Right cardiac atrium (tissue), 5 donors: ENCODE measurements at regions of chr2 and their contacts with region 1.

Region 1: DNA sequence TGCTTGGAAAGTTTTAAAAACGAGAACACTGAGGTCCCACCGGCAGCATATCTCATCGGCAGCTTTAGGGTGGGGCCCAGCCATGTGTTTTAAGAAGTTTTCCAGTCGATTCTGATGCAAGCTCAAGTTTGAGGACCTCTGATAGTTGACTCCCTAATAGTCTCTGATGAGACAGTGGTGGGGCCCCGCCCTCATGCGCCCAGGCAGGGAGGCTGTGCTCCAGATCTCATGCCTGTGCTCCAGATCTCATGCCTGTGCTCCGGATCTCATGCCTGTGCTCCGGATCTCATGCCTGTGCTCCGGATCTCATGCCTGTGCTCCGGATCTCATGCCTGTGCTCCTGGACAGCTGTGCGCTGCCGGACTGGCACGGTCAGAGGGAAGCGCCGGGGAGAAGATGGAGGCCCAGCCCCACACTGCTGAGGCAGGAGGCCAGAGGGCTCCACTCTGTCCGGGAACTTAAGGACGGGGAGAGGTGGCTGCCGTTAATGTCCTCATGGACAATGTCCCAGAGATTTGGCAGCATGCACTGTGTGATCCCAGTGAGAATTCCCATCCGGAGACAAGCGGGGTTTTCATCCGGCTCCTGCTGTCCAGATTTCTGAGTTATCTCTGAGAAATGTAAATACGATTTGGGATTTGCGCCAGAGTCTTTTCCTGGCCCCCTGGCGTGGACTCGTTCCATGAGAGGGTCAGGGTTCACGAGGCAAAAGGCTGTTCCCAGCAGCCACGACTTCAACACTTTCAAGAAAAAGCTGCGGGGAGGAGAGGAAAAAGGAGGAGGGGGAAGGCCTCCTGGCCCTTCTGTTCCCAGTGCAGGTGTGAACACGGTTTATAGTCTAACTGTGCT is 9.4 kb upstream of the COLEC11 start:
- DNase-seq: peak; percentile 77 to 91 (median 89)
- ATAC-seq: peak; percentile 93 to 94
- H3K4me3 ChIP-seq: no peak overlapping the region
- H3K27ac ChIP-seq: peak overlapping the region; percentile 100
- H3K4me1 ChIP-seq: peaks cover 7% of the 10 kb centered on the region
- H3K27me3 ChIP-seq: no peaks in the 10 kb centered on the region

Region 2: GRCh38 chr2:3644246-3644525 is 58.7 kb after region 1 on chr2:
- intact Hi-C with region 1: loop called in 1 of 4 experiments (anchors 10 kb)
- DNase-seq: no peak
- ATAC-seq: no peak
- H3K4me3 ChIP-seq: no peak overlapping the region
- H3K27ac ChIP-seq: no peak overlapping the region
- H3K4me1 ChIP-seq: no peaks in the 10 kb centered on the region
- H3K27me3 ChIP-seq: no peaks in the 10 kb centered on the region

Region 3: GRCh38 chr2:3651691-3652648 is 66.5 kb after region 1 on chr2:
- intact Hi-C with region 1: loop called in 2 of 4 experiments (anchors 5 to 10 kb)
- DNase-seq: peak; percentile 55 to 80 (median 77)
- ATAC-seq: peak; percentile 60 to 63
- H3K4me3 ChIP-seq: peak overlapping the region; percentile 3
- H3K27ac ChIP-seq: peak overlapping the region; percentile 38
- H3K4me1 ChIP-seq: no peaks in the 10 kb centered on the region
- H3K27me3 ChIP-seq: no peaks in the 10 kb centered on the region